ENCODE measurements at regions of chr2 and their contacts with region 1.

Region 1: DNA sequence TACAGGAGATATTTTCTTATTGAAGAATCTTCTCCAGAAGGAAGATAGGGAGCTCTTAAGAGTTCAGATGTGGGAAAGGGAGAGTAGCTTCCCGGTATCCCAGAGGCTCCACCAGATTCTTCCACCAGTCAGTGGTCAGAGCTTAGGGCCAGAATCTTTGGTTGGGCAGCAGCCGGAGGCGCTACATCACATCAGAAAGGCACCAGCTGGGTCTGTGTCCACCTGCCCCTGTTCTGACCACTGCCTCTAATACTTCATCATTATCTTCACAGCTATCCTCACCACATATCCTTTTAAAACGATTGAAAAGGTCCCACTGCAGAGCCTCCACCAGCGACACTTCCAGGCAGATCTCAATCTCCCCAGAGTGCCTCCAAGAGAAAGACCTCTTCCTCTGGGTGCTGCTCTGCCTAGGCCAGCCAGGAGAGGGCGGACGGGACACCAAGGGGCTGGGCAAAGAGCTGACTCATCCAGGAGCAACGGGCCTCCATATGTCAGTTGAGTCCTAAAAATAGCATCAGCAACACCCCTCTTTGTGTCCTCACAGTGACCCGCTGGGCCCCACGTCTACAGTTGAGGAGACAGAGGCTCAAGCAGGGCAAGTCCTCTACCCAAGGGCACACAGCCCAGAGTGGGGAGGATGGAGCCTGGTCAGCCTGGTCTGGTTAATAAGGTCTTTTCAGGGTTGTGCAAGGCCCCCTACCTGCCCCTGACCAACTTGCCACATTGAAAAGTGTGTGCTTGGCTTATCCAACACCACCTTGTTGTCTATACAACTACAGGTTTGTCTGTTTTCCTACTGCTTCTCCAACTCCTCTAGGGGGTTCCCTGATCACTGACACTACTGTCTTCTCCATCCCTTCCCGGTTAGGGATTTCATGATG is 81.2 kb downstream of the ADD2 start:
- DNase-seq: peak; percentile 13
- H3K4me3 Mint-ChIP-seq: no peak overlapping the region
- H3K27ac Mint-ChIP-seq: peak overlapping the region; percentile 6
- H3K4me1 Mint-ChIP-seq: no peaks in the 10 kb centered on the region
- H3K27me3 Mint-ChIP-seq: no peaks in the 10 kb centered on the region

Region 2: DNA sequence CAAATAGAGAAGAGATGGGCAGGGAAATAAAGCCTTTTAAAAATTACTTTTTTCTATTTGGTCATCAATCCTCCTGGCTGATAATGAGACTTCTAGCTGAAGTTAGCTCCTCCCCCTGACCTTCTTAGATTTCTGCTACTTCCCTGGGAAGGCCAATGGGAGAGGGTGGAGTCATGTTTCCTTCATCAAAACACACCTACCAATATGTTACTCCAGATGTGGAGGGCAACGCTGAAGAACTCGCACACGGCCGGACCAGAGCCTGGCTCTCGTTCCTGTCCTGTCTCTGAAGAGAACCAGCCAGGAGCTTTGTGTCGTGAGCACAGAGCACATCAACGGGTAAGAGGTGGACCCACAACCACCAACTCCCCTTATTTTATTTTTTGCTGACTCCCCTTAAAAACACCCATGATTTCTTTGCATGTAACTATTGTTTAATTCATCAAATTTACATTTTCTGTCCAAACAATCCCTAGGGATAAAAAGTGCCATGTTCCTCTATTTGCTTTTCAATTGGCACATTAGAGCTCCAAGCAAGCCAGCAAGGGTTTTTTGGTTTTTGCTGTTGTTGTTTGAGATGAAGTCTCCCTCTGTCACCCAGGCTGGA is 13.7 kb before region 1 on chr2:
- CTCF ChIA-PET with region 1: interaction called, 10 read pairs
- POLR2A ChIA-PET with region 1: no interaction called
- DNase-seq: no peak
- H3K4me3 Mint-ChIP-seq: no peak overlapping the region
- H3K27ac Mint-ChIP-seq: no peak overlapping the region
- H3K4me1 Mint-ChIP-seq: peaks cover 8% of the 10 kb centered on the region
- H3K27me3 Mint-ChIP-seq: no peaks in the 10 kb centered on the region

Measured in activated CD4-positive, alpha-beta T cell treated with anti-CD3 and anti-CD28 coated beads, Interleukin-2, amount 10 ng/mL, durations not matched to agents 7 days and 5 days (primary cell).